Activated CD8-positive, alpha-beta T cell treated with anti-CD3 and anti-CD28 coated beads, Interleukin-2, amount 10 ng/mL, durations not matched to agents 7 days and 5 days (primary cell): ENCODE measurements at regions of chr9 and their contacts with region 1.

Region 1: DNA sequence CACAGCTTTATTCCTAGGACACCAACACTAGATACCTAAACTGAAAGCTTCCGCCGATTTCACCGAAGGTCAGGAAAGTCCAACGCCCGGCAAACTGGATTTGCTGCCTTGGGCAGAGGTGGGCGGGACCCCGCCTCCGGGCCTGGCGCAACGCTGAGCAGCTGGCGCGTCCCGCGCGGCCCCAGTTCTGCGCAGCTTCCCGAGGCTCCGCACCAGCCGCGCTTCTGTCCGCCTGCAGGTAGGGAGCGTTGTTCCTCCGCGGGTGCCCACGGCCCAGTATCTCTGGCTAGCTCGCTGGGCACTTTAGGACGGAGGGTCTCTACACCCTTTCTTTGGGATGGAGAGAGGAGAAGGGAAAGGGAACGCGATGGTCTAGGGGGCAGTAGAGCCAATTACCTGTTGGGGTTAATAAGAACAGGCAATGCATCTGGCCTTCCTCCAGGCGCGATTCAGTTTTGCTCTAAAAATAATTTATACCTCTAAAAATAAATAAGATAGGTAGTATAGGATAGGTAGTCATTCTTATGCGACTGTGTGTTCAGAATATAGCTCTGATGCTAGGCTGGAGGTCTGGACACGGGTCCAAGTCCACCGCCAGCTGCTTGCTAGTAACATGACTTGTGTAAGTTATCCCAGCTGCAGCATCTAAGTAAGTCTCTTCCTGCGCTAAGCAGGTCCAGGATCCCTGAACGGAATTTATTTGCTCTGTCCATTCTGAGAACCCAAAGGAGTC is at the start of gene CD274:
- DNase-seq: peak; percentile 84
- ATAC-seq: peak; percentile 98
- H3K4me3 Mint-ChIP-seq: peak within 1 kb of the TSS; percentile 82
- H3K27ac Mint-ChIP-seq: peak within 1 kb of the TSS; percentile 89
- H3K4me1 Mint-ChIP-seq: peaks cover 69% of the 10 kb centered on the region
- H3K27me3 Mint-ChIP-seq: no peaks in the 10 kb centered on the region
- total RNA-seq, gene CD274: 4.0 to 4.9 TPM

Region 2: GRCh38 chr9:5263351-5264218 is 186.9 kb before region 1 on chr9:
- CTCF ChIA-PET with region 1: no interaction called
- POLR2A ChIA-PET with region 1: no interaction called
- DNase-seq: no peak
- ATAC-seq: peak; percentile 19
- H3K4me3 Mint-ChIP-seq: no peak overlapping the region
- H3K27ac Mint-ChIP-seq: no peak overlapping the region
- H3K4me1 Mint-ChIP-seq: peaks cover 10% of the 10 kb centered on the region
- H3K27me3 Mint-ChIP-seq: no peaks in the 10 kb centered on the region

Region 3: DNA sequence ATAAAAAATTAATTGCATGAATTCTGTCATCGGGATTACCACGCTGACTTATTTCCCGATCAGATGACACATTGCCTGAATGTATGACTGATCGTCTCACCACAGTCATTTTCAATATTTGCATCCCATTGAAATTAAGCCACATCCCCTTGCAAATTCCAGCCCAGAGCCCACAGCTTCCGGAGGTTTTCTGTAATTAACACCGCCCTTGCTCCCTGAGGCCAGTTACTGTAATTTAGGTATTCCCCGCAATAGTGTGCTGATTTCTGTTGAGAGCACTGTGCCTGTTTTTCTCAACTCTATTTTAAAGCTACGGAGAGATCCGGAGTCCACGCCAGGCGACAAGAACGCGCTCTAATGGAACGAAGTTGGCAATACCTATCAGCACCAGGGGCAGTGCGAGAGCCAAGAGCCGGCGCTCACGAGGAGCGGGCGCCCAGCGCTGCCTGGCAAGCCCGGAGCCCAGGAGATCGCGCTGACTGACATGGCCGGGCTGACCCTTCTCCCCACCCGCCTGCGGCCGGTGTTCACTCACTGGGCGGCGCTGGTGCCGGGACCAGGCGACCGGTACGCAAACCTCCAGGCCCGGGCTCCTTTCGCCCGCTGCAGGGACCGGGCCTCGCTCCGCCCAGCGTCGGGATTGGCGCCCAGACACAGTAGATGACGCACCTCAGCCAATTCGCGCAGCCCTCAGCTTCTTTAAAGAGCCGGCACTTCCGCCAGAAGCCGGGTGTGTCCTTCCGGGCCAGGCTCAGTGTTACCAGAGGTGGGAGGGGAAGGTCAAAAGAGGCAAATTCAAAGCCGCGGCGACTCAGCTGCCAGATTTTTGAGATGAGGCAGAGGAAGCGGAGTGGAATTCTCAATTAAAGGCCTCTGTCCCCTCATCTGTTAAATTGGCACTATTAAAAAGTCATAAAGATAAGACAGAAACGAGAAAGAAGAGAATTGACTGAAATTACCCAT is 13.0 kb before region 1 on chr9 and contains the start of gene PLGRKT:
- CTCF ChIA-PET with region 1: interaction called, 60 read pairs
- POLR2A ChIA-PET with region 1: interaction called, 26 read pairs
- DNase-seq: peak; percentile 95
- ATAC-seq: peak; percentile 99
- H3K4me3 Mint-ChIP-seq: peak within 1 kb of the TSS; percentile 96
- H3K27ac Mint-ChIP-seq: peak within 1 kb of the TSS; percentile 96
- H3K4me1 Mint-ChIP-seq: peaks cover 29% of the 10 kb centered on the region
- H3K27me3 Mint-ChIP-seq: no peaks in the 10 kb centered on the region
- total RNA-seq, gene PLGRKT: 30.5 to 30.7 TPM

Region 4: DNA sequence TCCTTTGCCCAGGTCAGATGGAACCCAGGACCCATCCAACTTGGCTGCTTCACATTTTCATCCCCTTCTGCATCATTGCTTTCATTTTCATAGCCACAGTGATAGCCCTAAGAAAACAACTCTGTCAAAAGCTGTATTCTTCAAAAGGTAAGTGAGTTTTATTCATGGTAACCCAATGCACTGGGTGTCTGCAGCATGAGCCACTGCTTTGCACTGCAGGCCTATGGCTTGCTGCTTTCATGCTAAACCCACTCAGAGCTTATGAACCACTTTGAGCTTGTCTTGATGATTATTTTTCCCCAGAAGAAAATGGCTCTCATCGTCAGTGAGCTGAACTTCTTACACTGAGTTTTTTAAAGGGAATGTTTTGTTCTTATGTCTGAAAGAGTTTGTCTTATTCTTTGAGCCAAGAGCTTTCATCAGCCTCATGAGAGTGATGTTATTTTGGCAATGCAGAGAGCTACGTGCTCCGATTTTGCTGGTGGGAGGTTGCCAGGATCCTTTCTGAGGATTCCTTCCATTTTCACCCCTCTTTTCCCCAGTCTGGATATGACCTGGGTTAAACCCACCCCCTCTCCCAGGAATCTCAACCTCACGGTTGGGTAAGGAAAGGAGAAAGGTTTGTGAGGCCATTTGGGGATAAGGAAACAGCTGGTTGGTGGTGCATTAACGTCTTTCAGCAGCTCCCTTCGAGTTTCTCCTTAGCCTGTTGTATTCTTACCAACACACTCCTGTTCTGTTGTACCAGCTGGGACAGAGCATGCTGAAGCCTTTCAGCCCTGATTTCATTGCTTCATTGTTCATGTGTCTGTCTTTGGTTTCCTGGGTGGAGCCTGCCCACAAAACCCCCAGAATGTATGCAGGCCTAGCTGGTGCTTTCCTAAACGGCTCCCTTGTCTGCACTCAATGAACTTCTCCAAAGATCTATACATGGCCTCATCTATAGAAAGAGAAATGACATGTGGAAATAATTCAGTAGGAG is 107.4 kb after region 1 on chr9:
- CTCF ChIA-PET with region 1: interaction called, 12 read pairs
- POLR2A ChIA-PET with region 1: interaction called, 4 read pairs
- DNase-seq: peak; percentile 71
- ATAC-seq: peak; percentile 91
- H3K4me3 Mint-ChIP-seq: peak overlapping the region; percentile 24
- H3K27ac Mint-ChIP-seq: peak overlapping the region; percentile 84
- H3K4me1 Mint-ChIP-seq: peaks cover 22% of the 10 kb centered on the region
- H3K27me3 Mint-ChIP-seq: no peaks in the 10 kb centered on the region

Region 5: DNA sequence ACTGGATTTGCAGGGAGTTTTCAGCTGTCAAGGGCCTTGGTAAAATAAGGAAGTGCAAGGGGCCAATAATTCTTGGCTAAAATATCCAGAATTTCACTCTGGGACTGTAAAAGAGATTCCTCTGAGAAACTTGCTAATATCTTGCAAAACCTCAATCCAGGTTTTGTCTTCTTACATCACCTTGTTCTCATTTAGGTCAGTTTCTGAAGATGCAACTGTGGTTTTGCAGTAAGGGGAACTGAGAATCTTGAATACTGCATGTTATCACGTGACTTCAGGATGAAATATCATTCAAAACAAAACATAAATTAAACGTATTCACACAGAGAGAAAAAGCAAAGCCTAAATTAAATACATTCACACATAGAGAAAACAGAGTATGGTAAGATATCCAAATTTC is 143.4 kb after region 1 on chr9:
- CTCF ChIA-PET with region 1: interaction called, 127 read pairs
- POLR2A ChIA-PET with region 1: interaction called, 3 read pairs
- DNase-seq: no peak
- ATAC-seq: no peak
- H3K4me3 Mint-ChIP-seq: no peak overlapping the region
- H3K27ac Mint-ChIP-seq: no peak overlapping the region
- H3K4me1 Mint-ChIP-seq: peaks cover 8% of the 10 kb centered on the region
- H3K27me3 Mint-ChIP-seq: no peaks in the 10 kb centered on the region